ENCODE measurements at regions of chr7 and their contacts with region 1.

Region 1: GRCh38 chr7:56009695-56010094 is 41.5 kb downstream of the PSPH start:
- DNase-seq: peak; percentile 81
- H3K4me3 ChIP-seq: no peak overlapping the region
- H3K27ac ChIP-seq: no peak overlapping the region
- H3K4me1 ChIP-seq: peaks cover 13% of the 10 kb centered on the region
- H3K27me3 ChIP-seq: no peaks in the 10 kb centered on the region
- CTCF ChIP-seq: no peak
- POLR2A ChIP-seq: no peak

Region 2: GRCh38 chr7:55144333-55145317 is 865.1 kb before region 1 on chr7:
- intact Hi-C with region 1: no loop called
- DNase-seq: no peak
- H3K4me3 ChIP-seq: no peak overlapping the region
- H3K27ac ChIP-seq: no peak overlapping the region
- H3K4me1 ChIP-seq: peaks cover 4% of the 10 kb centered on the region
- H3K27me3 ChIP-seq: no peaks in the 10 kb centered on the region
- CTCF ChIP-seq: no peak
- POLR2A ChIP-seq: no peak

Region 3: GRCh38 chr7:55878691-55879090 is 131.0 kb before region 1 on chr7:
- intact Hi-C with region 1: no loop called
- DNase-seq: no peak
- H3K4me3 ChIP-seq: no peak overlapping the region
- H3K27ac ChIP-seq: no peak overlapping the region
- H3K4me1 ChIP-seq: peaks cover 8% of the 10 kb centered on the region
- H3K27me3 ChIP-seq: no peaks in the 10 kb centered on the region
- CTCF ChIP-seq: no peak
- POLR2A ChIP-seq: no peak

Region 4: DNA sequence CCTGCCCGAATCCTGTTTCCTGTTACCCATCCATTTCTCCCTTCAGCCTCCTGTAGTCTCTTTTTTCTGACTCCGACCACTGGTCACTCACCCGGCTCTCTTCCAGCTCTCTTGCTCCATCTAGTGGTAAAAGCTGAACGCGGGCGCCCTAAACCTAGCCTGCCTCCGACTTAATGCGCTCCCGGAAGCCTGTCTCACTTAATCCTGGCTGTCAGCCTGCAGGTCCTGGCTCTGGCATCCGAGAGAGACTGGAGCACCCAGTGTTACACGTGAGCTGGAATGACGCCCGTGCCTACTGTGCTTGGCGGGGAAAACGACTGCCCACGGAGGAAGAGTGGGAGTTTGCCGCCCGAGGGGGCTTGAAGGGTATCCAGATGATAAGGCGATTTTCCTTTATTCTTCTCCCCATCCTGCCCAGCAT is 64.7 kb after region 1 on chr7:
- intact Hi-C with region 1: loop called (anchors 10 kb)
- DNase-seq: peak; percentile 87
- H3K4me3 ChIP-seq: no peak overlapping the region
- H3K27ac ChIP-seq: no peak overlapping the region
- H3K4me1 ChIP-seq: peaks cover 8% of the 10 kb centered on the region
- H3K27me3 ChIP-seq: no peaks in the 10 kb centered on the region
- CTCF ChIP-seq: peak; percentile 81 to 89 (median 83)
- POLR2A ChIP-seq: no peak

Measured in testis (tissue), 5 donors.